ENCODE measurements at regions of chr11 and their contacts with region 1.

Region 1: GRCh38 chr11:1837171-1838076 is 1.4 kb upstream of the TNNI2 start:
- DNase-seq: no peak
- H3K4me3 ChIP-seq: no peak overlapping the region
- H3K27ac ChIP-seq: no peak overlapping the region
- H3K4me1 ChIP-seq: peaks cover 10 to 30% (median 15%) of the 10 kb centered on the region in 4 donors
- H3K27me3 ChIP-seq: peaks cover 0 to 13% (median 0%) of the 10 kb centered on the region in 4 donors
- CTCF ChIP-seq: peak; percentile 82 to 88 (median 86)
- EP300 ChIP-seq: no peak
- POLR2A ChIP-seq: no peak

Region 2: DNA sequence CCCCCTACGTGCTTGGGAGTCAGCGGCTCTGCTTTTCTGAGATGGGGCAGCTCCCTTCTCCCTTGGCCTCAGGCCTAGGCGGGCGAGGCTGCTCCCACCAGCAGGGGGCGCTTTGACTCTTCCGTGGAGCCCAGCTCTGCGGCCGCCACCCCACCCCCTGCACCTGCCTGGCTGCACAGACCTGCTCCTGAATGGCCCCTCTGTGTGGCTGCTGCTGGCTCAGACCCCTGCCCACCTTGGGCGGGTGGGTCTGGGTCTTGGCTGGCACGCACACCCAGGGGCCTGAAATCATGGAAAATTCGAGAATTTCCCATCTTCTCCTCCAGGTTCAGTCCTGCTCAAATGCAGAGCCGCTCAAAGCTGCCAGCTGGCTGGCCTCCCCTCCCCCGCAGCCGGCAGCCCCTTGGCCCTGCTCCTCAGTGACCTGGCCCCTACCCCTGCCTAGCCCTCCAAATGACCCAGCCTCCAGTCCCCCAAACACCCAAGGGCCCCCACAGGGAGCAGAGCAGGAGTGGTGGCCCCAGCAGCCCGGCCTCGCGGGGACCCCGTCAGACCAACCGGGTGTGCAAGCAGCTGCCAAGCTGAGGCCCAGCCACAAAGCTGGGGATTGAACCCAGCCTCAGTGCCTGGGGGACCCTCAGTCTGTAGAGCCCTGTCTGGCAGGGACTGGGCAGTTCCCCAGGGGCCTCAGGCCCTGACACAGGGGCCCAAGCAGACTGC is 45.3 kb after region 1 on chr11:
- intact Hi-C with region 1: loop called (anchors 5 kb)
- DNase-seq: peak; percentile 96
- H3K4me3 ChIP-seq: peak overlapping the region in 1 of 4 donors; percentile 2
- H3K27ac ChIP-seq: peak overlapping the region; percentile 79 to 84 (median 82)
- H3K4me1 ChIP-seq: peaks cover 41 to 52% (median 48%) of the 10 kb centered on the region in 4 donors
- H3K27me3 ChIP-seq: no peaks in the 10 kb centered on the region
- CTCF ChIP-seq: peak; percentile 81 to 94 (median 92)
- EP300 ChIP-seq: no peak
- POLR2A ChIP-seq: no peak